ENCODE measurements at regions of chr9 and their contacts with region 1.

Region 1: GRCh38 chr9:70406434-70406862 is 8.0 kb downstream of the KLF9 start:
- DNase-seq: peak; percentile 62
- ATAC-seq: no peak
- H3K4me3 ChIP-seq: no peak overlapping the region
- H3K27ac ChIP-seq: peak overlapping the region; percentile 90
- H3K4me1 ChIP-seq: peaks cover 34% of the 10 kb centered on the region
- H3K27me3 ChIP-seq: no peaks in the 10 kb centered on the region
- CTCF ChIP-seq: no peak
- POLR2A ChIP-seq: peak; percentile 13; the same call in 1 of the 2 replicates
- RAD21 ChIP-seq: no peak

Region 2: GRCh38 chr9:70352802-70353201 is 53.6 kb before region 1 on chr9:
- CTCF ChIA-PET with region 1: no interaction called
- POLR2A ChIA-PET with region 1: no interaction called
- dilution Hi-C with region 1: no loop called
- in situ Hi-C with region 1: loop called (anchors 5 kb)
- intact Hi-C with region 1: loop called (anchors 5 kb)
- DNase-seq: no peak
- ATAC-seq: no peak
- H3K4me3 ChIP-seq: no peak overlapping the region
- H3K27ac ChIP-seq: no peak overlapping the region
- H3K4me1 ChIP-seq: no peaks in the 10 kb centered on the region
- H3K27me3 ChIP-seq: no peaks in the 10 kb centered on the region
- CTCF ChIP-seq: 0 out of 2 replicates have a peak, but pooled peaks have one; percentile 24
- POLR2A ChIP-seq: no peak
- RAD21 ChIP-seq: peak; percentile 38; the same call in 1 of the 2 replicates